ENCODE measurements at regions of chr2 and their contacts with region 1.

Region 1: DNA sequence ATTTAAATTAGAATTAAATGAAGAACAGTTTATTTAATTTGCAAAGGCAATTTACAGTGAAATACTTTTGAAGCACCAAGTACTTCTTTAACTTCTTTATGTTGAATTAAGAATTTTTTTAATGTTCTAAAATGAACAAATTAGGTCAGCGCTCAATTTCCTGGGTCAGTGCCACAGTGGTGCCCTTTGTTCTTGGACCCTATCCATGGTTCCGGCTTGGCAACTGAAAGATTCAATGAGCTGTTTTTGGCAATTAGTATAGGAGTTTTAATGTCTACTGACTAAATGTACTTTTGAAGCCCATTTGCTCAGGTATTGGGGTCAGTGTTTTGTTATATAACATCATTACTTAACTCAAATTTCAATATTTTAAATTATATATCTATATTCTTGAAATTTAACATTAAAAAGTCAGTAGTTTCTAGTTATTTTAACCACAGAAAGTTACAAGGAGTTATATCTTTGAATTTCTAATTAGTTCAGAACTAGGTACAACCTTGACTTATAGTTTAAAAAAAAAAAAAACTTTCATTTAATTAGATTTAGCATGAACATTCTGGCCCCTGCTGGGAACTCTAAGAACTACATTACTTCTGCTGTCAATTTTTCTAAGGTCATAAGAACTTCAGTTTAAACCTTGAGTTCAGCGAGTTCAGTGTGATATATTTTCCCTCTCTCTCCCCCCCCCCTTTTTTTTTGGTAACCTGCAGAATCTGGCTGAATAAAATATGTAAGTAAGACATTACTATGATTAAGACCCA is 7.6 kb upstream of the MSTN start:
- DNase-seq: peak; percentile 73
- H3K4me3 ChIP-seq: no peak overlapping the region
- H3K27ac ChIP-seq: no peak overlapping the region
- H3K4me1 ChIP-seq: peaks cover 4% of the 10 kb centered on the region
- H3K27me3 ChIP-seq: no peaks in the 10 kb centered on the region
- CTCF ChIP-seq: peak; percentile 68

Region 2: DNA sequence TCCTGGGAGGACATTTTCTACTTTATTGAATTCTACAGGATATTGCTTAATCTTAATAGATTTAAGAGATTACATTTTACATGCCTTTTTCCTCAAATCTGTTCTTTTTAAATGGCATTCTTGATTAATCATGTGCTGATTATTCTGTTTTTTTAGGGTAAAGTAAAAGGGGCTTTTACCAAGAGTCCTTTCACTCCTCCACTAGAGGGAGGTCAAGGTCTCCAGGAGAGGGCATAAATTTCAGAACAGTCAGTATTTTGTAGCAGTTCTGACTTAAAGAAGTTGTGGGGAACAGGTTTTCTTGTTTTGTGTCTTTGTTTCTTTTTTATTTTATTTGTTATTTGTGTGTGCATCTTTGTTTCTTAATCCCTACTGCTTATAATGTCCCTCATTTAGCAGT is 603.5 kb before region 1 on chr2:
- CTCF ChIA-PET with region 1: no interaction called
- POLR2A ChIA-PET with region 1: no interaction called
- intact Hi-C with region 1: no loop called
- DNase-seq: peak; percentile 53
- H3K4me3 ChIP-seq: no peak overlapping the region
- H3K27ac ChIP-seq: no peak overlapping the region
- H3K4me1 ChIP-seq: no peaks in the 10 kb centered on the region
- H3K27me3 ChIP-seq: no peaks in the 10 kb centered on the region
- CTCF ChIP-seq: peak; percentile 65

Region 3: DNA sequence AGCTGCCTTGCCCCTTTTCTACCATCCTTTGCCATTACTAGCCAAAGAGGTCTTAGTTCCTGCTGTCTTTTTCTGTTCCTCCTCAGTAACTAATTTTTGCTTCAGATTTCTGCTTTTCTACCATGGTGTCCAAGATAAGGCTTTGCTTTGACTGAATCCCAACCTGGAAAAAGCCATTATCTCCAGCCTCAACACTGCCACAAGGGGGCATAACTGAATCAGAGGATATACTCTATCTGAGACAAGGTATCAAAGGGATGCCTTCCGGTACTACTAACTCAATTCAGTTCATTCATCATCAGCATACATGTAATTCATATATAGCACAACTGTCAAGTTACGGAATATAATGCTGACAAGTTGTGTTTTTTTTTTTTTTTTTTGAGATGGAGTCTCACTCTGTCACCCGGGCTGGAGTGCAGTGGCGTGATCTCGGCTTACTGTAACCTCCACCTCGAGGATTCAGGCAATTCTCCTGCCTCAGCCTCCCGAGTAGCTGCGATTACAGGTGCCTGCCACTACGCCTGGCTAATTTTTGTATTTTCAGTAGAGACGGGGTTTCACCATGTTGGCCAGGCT is 318.9 kb before region 1 on chr2:
- CTCF ChIA-PET with region 1: interaction called, 10 read pairs
- POLR2A ChIA-PET with region 1: interaction called, 7 read pairs
- intact Hi-C with region 1: loop called (anchors 5 kb)
- DNase-seq: peak; percentile 58
- H3K4me3 ChIP-seq: no peak overlapping the region
- H3K27ac ChIP-seq: no peak overlapping the region
- H3K4me1 ChIP-seq: no peaks in the 10 kb centered on the region
- H3K27me3 ChIP-seq: no peaks in the 10 kb centered on the region
- CTCF ChIP-seq: peak; percentile 79